Activated T-helper 1 cell treated with anti-CD3 and anti-CD28 coated beads, Interleukin-12 subunit alpha, Interleukin-12 subunit beta, Interleukin-2, Interleukin-4 antibody, amounts not matched to agents 30 ng/mL and 10 ng/mL and 1 ng/mL, durations not matched to agents 14 hours and 24 hours and 36 hours (primary cell): ENCODE measurements at regions of chr6 and their contacts with region 1.

Region 1: GRCh38 chr6:39114704-39115599 is at the start of gene SAYSD1:
- DNase-seq: peak; percentile 92
- H3K4me3 Mint-ChIP-seq: peak within 1 kb of the TSS; percentile 95
- H3K27ac Mint-ChIP-seq: peak within 1 kb of the TSS; percentile 97
- H3K4me1 Mint-ChIP-seq: peaks cover 63% of the 10 kb centered on the region
- H3K27me3 Mint-ChIP-seq: no peaks in the 10 kb centered on the region
- total RNA-seq, gene SAYSD1: 12.1 and 12.9 TPM in 2 replicates

Region 2: GRCh38 chr6:38570750-38571149 is 544.2 kb before region 1 on chr6:
- intact Hi-C with region 1: loop called (anchors 2 kb)
- DNase-seq: no peak
- H3K4me3 Mint-ChIP-seq: no peak overlapping the region
- H3K27ac Mint-ChIP-seq: no peak overlapping the region
- H3K4me1 Mint-ChIP-seq: peaks cover 11% of the 10 kb centered on the region
- H3K27me3 Mint-ChIP-seq: no peaks in the 10 kb centered on the region

Region 3: DNA sequence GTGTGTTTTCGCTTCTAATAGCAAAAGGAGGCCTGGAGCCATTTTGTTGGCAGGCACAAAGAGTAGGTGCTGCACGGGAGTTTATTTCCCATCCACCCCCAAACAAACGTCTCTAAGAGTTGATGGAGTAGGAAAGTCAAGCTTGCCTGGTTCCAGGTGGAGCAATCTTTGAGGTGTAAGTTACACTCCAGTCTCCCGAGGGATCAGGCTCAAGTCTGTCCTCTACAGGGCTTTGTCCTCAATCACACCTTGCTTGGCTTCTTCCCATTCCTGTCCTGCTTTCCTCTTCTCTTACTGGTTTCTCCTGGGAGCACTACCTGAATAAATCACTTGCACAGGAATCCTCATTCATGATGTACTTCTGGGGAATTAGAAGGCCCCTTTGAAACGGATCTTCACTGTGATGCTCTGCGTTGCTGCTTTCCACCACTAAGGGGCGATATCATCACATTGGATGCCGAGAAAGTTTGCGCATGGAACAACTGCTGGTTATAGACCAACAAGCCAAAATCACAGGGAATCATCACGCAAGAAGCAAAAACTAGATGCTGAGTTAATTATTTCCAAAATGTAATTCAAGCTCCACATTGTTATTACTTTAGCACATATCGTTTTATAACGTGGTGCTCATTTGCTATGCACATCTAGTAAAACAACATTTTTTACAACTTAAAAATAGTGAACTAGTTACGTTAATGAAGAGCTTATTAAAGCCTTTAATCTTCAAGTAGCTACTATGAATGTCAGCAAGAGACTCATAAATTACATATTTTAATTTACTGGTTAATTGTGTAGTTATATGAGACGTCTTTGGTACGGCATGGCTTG is 243.0 kb before region 1 on chr6:
- intact Hi-C with region 1: loop called (anchors 5 kb)
- DNase-seq: peak; percentile 36
- H3K4me3 Mint-ChIP-seq: no peak overlapping the region
- H3K27ac Mint-ChIP-seq: no peak overlapping the region
- H3K4me1 Mint-ChIP-seq: peaks cover 37% of the 10 kb centered on the region
- H3K27me3 Mint-ChIP-seq: peaks cover 6% of the 10 kb centered on the region

Region 4: GRCh38 chr6:39153766-39154397 is 38.9 kb after region 1 on chr6:
- intact Hi-C with region 1: loop called (anchors 1 kb)
- DNase-seq: no peak
- H3K4me3 Mint-ChIP-seq: no peak overlapping the region
- H3K27ac Mint-ChIP-seq: peak overlapping the region; percentile 55
- H3K4me1 Mint-ChIP-seq: peaks cover 33% of the 10 kb centered on the region
- H3K27me3 Mint-ChIP-seq: peaks cover 6% of the 10 kb centered on the region

Region 5: DNA sequence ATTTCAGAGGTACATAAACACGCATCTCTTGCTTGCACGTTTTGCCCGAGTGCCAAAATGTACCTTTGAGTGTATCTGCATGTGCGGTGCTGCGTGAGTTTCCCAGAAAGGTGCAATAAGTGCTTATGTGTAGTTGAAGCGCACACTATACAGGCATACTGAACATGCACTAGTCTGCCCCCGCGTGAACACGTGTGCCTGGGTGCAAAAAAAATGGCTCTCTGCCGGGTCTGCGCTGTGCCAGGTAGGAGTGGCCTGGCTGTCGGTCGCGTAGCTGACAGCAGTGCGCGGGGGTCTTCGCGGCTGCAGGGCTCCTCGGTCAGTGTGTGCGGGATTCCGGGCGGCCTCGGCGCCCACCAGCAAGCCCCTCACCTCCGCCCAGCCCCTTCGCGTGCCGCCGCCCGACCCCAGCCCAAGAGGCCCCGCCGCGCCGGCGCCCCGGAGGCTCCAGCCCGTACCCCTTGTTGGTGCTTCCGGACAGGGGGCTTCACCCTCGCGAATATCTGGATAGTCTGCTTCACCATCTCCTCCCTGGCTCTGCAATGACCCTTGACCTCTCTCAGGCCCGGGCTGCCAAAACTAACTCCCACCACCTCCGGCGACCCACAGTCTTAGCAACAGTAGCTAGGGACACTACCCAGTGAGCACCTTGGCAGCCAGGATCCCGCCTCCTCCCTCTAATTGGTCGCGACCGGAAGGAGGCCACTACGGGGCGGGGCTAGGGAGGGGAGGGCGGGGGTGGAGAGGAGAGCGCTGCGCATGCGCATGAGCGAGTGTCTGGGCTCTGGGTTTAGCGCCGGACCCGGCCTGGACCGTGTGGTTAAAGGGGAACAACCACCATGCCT is 610.1 kb after region 1 on chr6 and contains the start of gene KIF6:
- intact Hi-C with region 1: loop called (anchors 10 kb)
- DNase-seq: peak; percentile 66
- H3K4me3 Mint-ChIP-seq: peak within 1 kb of the TSS; percentile 87
- H3K27ac Mint-ChIP-seq: peak within 1 kb of the TSS; percentile 68
- H3K4me1 Mint-ChIP-seq: no peaks in the 10 kb centered on the region
- H3K27me3 Mint-ChIP-seq: no peaks in the 10 kb centered on the region
- total RNA-seq, gene KIF6: 0.08 and 0.15 TPM in 2 replicates